ENCODE measurements at regions of chr1 and their contacts with region 1.

Region 1: GRCh38 chr1:146036965-146037646 is 15.6 kb upstream of the HJV start:
- DNase-seq: peak; percentile 58
- CTCF ChIP-seq: no peak

Region 2: DNA sequence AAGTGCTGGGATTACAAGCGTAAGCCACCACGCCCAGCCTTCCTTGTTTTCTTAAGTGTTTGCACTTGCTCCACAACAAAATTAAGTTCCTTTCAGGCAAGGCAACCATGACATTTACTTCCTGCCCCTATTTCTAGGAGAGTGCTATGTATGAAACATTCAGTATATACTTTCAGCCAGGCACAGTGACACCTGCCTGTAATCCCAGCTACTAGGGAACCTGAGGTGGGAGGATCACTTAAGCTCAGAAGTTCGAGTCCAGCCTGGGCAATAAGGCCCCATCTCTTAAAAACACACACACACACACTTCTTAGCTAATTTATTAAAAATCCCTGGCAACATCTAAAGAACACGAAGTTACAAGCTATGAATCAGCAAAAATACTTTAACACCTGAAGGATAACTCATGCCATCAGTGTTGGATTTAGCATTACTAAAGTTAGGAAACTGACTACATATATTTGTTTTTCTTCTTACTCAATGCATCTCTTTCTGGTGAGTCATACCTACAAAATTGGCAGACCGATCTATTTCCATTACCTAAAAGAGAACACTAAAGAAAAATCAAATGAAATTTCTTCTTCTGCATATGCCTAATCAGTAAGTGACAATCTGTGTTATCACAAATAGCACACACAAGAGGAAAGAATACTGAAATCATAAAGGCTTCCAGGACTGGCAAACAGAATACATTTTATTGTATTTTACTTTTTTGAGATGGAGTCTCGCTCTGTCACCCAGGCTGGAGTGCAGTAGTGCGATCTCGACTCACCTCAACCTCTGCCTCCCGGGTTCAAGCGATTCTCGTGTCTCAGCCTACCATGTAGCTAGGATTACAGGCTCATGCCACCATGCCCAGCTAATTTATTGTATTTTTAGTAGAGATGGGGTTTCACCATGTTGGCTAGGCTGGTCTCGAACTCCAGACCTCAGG is 254.7 kb before region 1 on chr1:
- CTCF ChIA-PET with region 1: no interaction called
- POLR2A ChIA-PET with region 1: no interaction called
- DNase-seq: no peak
- CTCF ChIP-seq: no peak

Region 3: GRCh38 chr1:145885738-145886287 is 151.3 kb before region 1 on chr1 and contains the start of gene ANKRD35:
- CTCF ChIA-PET with region 1: no interaction called
- POLR2A ChIA-PET with region 1: no interaction called
- DNase-seq: peak; percentile 96
- CTCF ChIP-seq: no peak

Region 4: GRCh38 chr1:145947551-145947950 is 89.6 kb before region 1 on chr1:
- CTCF ChIA-PET with region 1: no interaction called
- POLR2A ChIA-PET with region 1: no interaction called
- DNase-seq: no peak
- CTCF ChIP-seq: no peak

Region 5: DNA sequence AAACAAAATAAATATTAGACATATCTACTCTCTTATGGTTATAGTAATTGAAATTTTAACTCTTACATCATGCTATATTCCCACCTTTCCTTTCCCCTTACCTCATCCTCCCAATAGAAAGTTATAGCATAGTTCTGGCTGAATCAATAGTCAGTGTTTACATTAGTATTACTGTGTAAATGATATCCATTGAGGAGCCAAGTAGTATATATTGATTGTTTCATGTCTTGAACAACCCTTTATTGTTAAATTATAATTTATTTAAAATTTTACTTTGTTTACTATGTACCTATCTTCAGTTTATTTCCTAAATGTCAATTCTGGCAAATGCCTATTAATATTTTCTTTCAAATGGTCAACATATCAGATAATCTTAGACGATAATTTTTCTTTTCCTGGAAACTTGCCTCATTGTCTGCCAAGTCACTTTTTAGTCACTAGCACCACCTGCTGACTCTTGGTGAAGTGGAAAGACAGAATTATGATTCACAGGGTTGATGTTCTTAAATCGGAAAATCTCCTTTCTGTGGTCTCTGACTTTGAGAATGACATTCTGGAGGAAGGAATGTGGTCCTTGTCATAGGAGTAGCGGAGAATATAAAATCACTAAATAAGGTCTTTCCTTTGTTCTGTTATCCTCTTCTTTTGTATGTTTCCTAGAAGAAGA is 24.2 kb before region 1 on chr1:
- CTCF ChIA-PET with region 1: interaction called, 10 read pairs
- POLR2A ChIA-PET with region 1: no interaction called
- DNase-seq: peak; percentile 65
- CTCF ChIP-seq: peak; percentile 77

Region 6: GRCh38 chr1:146019231-146020057 is 17.7 kb before region 1 on chr1:
- CTCF ChIA-PET with region 1: interaction called, 34 read pairs
- POLR2A ChIA-PET with region 1: no interaction called
- DNase-seq: no peak
- CTCF ChIP-seq: no peak

Region 7: GRCh38 chr1:146049436-146049835 is 12.3 kb after region 1 on chr1:
- CTCF ChIA-PET with region 1: interaction called, 6 read pairs
- POLR2A ChIA-PET with region 1: interaction called, 49 read pairs
- DNase-seq: no peak
- CTCF ChIP-seq: no peak

Measured in GM10248 (cell line).